ENCODE measurements at regions of chr9 and their contacts with region 1.

Region 1: DNA sequence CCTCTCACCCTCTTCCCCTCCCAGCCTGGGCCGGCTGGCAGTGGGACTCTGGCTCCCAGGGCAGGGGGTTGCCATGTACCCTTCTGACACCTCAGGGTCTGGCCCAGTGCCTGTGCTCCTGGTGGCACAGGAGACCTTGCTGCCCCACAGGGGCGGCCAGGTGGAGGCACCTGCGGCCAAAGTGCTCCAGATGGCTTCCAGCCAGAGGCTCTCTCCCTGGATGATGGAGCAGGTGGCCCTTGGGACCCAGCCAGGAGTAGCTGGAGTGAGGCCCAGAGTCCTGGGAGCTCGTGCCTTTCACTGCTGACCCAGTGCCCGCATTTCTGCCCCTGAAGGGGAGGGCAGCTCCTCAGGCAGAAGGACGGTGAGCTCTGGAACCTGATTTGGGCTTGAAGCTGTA is 87.3 kb downstream of the NTNG2 start:
- DNase-seq: no peak
- ATAC-seq: no peak
- H3K4me3 ChIP-seq: no peak overlapping the region
- H3K4me3 Mint-ChIP-seq: no peak overlapping the region
- H3K27ac ChIP-seq: no peak overlapping the region
- H3K27ac Mint-ChIP-seq: no peak overlapping the region
- H3K4me1 ChIP-seq: no peaks in the 10 kb centered on the region
- H3K4me1 Mint-ChIP-seq: peaks cover 5% of the 10 kb centered on the region
- H3K27me3 ChIP-seq: peaks cover 0 to 3% of the 10 kb centered on the region in 2 experiments
- H3K27me3 Mint-ChIP-seq: peaks cover 5% of the 10 kb centered on the region
- CTCF ChIP-seq: no peak

Region 2: GRCh38 chr9:131755541-131756198 is 493.5 kb before region 1 on chr9:
- CTCF ChIA-PET with region 1: interaction called, 111 read pairs
- POLR2A ChIA-PET with region 1: no interaction called
- intact Hi-C with region 1: no loop called
- DNase-seq: peak; percentile 73 to 91 (median 89)
- ATAC-seq: peak; percentile 100
- H3K4me3 ChIP-seq: no peak overlapping the region
- H3K4me3 Mint-ChIP-seq: no peak overlapping the region
- H3K27ac ChIP-seq: no peak overlapping the region
- H3K27ac Mint-ChIP-seq: no peak overlapping the region
- H3K4me1 ChIP-seq: peaks cover 7% of the 10 kb centered on the region
- H3K4me1 Mint-ChIP-seq: peaks cover 6% of the 10 kb centered on the region
- H3K27me3 ChIP-seq: no peaks in the 10 kb centered on the region
- H3K27me3 Mint-ChIP-seq: peaks cover 6% of the 10 kb centered on the region
- CTCF ChIP-seq: peak; percentile 87

Region 3: DNA sequence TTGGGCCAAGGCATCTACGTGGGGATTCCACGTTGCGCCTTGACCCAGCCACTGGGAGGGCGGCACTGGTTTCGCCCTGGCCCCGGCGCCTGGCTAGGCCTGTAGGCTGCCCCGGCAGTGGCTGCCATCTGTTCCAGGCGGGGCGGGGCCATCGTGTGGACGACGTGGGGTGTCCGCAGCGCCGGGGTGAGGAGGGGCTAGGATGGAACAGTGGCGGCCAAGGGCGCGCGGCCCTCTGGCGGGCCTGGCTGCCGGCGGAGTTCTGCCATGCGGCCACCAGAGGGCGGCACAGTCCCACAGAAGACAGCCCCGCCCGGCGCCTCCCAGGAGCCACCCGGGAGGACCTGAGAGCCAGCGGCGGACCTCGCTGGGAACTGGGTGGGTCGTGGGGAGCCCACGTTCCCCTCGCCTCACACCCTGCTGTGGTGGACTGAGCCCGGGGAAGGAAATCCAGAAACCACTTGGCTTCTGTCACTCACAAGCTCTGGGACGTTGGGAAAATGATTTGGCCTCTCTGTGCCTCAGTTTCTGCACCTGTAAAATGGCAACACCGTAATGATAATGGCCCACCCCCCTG is 486.7 kb before region 1 on chr9:
- CTCF ChIA-PET with region 1: interaction called, 111 read pairs
- POLR2A ChIA-PET with region 1: no interaction called
- intact Hi-C with region 1: loop called (anchors 1 kb)
- DNase-seq: peak; percentile 57 to 87 (median 75)
- ATAC-seq: peak; percentile 94
- H3K4me3 ChIP-seq: no peak overlapping the region
- H3K4me3 Mint-ChIP-seq: no peak overlapping the region
- H3K27ac ChIP-seq: no peak overlapping the region
- H3K27ac Mint-ChIP-seq: no peak overlapping the region
- H3K4me1 ChIP-seq: peaks cover 5% of the 10 kb centered on the region
- H3K4me1 Mint-ChIP-seq: peaks cover 1% of the 10 kb centered on the region
- H3K27me3 ChIP-seq: no peaks in the 10 kb centered on the region
- H3K27me3 Mint-ChIP-seq: peaks cover 6% of the 10 kb centered on the region
- CTCF ChIP-seq: peak; percentile 99

Region 4: DNA sequence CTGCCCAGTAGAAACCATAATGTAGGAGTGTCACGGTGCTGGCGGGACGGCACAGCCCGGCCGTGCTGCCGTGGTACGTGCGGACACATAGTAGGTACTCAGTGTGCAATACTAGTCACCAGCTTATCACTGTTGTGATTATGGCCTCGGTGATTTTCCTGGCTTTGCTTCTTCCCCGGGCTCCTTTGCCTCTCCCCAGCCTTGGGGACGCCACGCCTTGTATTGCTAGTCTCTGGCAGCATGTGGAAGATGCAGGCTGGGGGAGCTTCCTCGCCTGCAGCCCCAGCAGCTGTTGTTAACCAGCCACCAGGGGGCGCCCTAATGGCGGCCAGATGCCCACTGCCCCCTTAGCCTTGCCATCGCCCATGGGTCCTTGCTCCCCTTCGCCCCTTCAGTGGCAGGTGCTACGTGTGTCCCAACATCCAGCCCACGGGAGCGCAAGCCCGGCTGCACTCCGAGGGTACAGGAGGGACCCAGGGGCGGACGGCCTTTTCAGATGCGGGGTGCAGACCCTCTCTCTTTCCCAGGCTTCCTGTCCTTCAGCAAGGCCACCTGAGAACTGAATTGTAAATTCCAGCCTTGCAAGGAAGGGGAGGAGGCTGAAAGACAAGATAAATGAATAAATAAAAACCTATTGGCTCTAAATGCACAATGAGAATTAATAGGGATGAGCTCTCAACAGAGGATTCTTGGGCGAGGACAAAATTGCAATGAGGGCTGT is 79.3 kb before region 1 on chr9:
- CTCF ChIA-PET with region 1: interaction called, 55 read pairs
- POLR2A ChIA-PET with region 1: no interaction called
- intact Hi-C with region 1: no loop called
- DNase-seq: peak; percentile 13 to 74 (median 59)
- ATAC-seq: peak; percentile 64
- H3K4me3 ChIP-seq: no peak overlapping the region
- H3K4me3 Mint-ChIP-seq: no peak overlapping the region
- H3K27ac ChIP-seq: no peak overlapping the region
- H3K27ac Mint-ChIP-seq: no peak overlapping the region
- H3K4me1 ChIP-seq: no peaks in the 10 kb centered on the region
- H3K4me1 Mint-ChIP-seq: no peaks in the 10 kb centered on the region
- H3K27me3 ChIP-seq: no peaks in the 10 kb centered on the region
- H3K27me3 Mint-ChIP-seq: peaks cover 34% of the 10 kb centered on the region
- CTCF ChIP-seq: peak; percentile 77

Region 5: DNA sequence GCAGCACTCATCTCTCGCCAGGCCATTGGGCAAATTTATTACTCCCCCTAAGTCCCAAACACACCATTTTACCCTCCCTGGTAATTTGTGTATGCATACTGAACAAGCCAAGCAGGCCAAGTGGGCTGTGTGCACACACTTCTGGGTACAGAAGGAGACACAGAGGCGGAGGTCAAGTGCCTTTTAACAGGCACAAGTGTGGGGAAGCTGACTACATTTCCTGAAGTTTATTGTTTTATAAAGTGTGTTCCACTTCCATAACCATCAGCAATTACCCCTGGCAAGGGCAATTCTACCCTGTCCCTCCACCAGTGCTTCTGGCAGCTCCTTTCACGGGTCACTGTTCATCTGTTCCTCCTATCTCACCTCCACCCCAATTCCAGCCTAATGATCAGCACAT is 11.7 kb after region 1 on chr9:
- CTCF ChIA-PET with region 1: interaction called, 11 read pairs
- POLR2A ChIA-PET with region 1: no interaction called
- intact Hi-C with region 1: no loop called
- DNase-seq: peak in 1 of 9 experiments; percentile 29
- ATAC-seq: no peak
- H3K4me3 ChIP-seq: no peak overlapping the region
- H3K4me3 Mint-ChIP-seq: no peak overlapping the region
- H3K27ac ChIP-seq: no peak overlapping the region
- H3K27ac Mint-ChIP-seq: no peak overlapping the region
- H3K4me1 ChIP-seq: peaks cover 9% of the 10 kb centered on the region
- H3K4me1 Mint-ChIP-seq: peaks cover 10% of the 10 kb centered on the region
- H3K27me3 ChIP-seq: no peaks in the 10 kb centered on the region
- H3K27me3 Mint-ChIP-seq: no peaks in the 10 kb centered on the region
- CTCF ChIP-seq: no peak

Measured in CD8-positive, alpha-beta T cell (primary cell).